Activated naive CD4-positive, alpha-beta T cell treated with anti-CD3 and anti-CD28 coated beads for 36 hours (primary cell): ENCODE measurements at regions of chr3 and their contacts with region 1.

Region 1: DNA sequence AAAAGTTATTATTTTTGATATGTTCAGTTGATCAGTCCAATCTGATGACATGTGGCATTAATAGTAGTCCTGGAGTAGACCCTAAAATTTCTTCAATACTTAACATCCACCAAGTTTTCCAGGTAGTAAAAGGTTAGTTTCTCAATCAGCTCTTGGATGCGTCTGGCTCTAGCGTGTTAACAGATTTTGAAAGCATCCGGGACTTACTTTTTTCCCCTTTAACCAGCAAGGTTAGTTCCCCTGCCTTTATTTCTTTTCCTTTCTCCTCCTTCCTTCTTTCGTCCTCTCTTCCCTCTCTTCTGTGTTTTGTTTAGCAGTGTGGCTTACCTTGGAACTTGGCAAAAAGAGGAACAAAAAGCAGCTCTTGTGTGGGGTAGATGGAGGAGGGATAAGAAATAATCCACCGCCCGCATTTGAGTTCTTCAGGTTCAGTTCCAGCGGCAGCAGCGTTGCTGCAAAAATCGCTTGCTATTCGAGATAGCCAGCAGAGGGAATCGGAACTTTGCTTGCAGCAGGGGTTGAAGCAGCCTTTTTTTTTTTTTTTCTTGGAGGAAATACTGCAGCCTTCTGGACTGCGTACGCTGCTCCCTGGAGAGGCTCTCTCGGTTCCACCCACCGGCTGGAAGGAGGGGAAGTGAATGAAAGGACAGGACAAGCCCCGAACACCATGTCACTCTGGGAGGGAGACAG is at the start of gene RBMS3:
- DNase-seq: peak; percentile 24
- H3K4me3 Mint-ChIP-seq: peak within 1 kb of the TSS; percentile 62
- H3K27ac Mint-ChIP-seq: peak within 1 kb of the TSS; percentile 64
- H3K4me1 Mint-ChIP-seq: peaks cover 34% of the 10 kb centered on the region
- H3K27me3 Mint-ChIP-seq: peaks cover 18% of the 10 kb centered on the region
- total RNA-seq, gene RBMS3: 0.84 to 1.1 TPM

Region 2: GRCh38 chr3:28840976-28841376 is 439.6 kb before region 1 on chr3:
- CTCF ChIA-PET with region 1: no interaction called
- intact Hi-C with region 1: loop called (anchors 1 kb)
- DNase-seq: peak; percentile 22
- H3K4me3 Mint-ChIP-seq: no peak overlapping the region
- H3K27ac Mint-ChIP-seq: no peak overlapping the region
- H3K4me1 Mint-ChIP-seq: peaks cover 5% of the 10 kb centered on the region
- H3K27me3 Mint-ChIP-seq: peaks cover 2% of the 10 kb centered on the region

Region 3: GRCh38 chr3:28935146-28935545 is 345.4 kb before region 1 on chr3:
- CTCF ChIA-PET with region 1: no interaction called
- intact Hi-C with region 1: loop called (anchors 1 kb)
- DNase-seq: peak; percentile 9
- H3K4me3 Mint-ChIP-seq: no peak overlapping the region
- H3K27ac Mint-ChIP-seq: peak overlapping the region; percentile 44
- H3K4me1 Mint-ChIP-seq: peaks cover 14% of the 10 kb centered on the region
- H3K27me3 Mint-ChIP-seq: peaks cover 3% of the 10 kb centered on the region

Region 4: GRCh38 chr3:29137601-29138000 is 142.9 kb before region 1 on chr3:
- CTCF ChIA-PET with region 1: no interaction called
- intact Hi-C with region 1: loop called (anchors 5 kb)
- DNase-seq: peak; percentile 34
- H3K4me3 Mint-ChIP-seq: no peak overlapping the region
- H3K27ac Mint-ChIP-seq: no peak overlapping the region
- H3K4me1 Mint-ChIP-seq: peaks cover 3% of the 10 kb centered on the region
- H3K27me3 Mint-ChIP-seq: no peaks in the 10 kb centered on the region

Region 5: GRCh38 chr3:29186982-29187725 is 93.4 kb before region 1 on chr3:
- CTCF ChIA-PET with region 1: no interaction called
- intact Hi-C with region 1: loop called (anchors 1 kb)
- DNase-seq: no peak
- H3K4me3 Mint-ChIP-seq: no peak overlapping the region
- H3K27ac Mint-ChIP-seq: peak overlapping the region; percentile 38
- H3K4me1 Mint-ChIP-seq: peaks cover 12% of the 10 kb centered on the region
- H3K27me3 Mint-ChIP-seq: no peaks in the 10 kb centered on the region

Region 6: GRCh38 chr3:29293206-29293775 is 12.7 kb after region 1 on chr3:
- CTCF ChIA-PET with region 1: no interaction called
- intact Hi-C with region 1: no loop called
- DNase-seq: no peak
- H3K4me3 Mint-ChIP-seq: no peak overlapping the region
- H3K27ac Mint-ChIP-seq: no peak overlapping the region
- H3K4me1 Mint-ChIP-seq: no peaks in the 10 kb centered on the region
- H3K27me3 Mint-ChIP-seq: peaks cover 5% of the 10 kb centered on the region

Region 7: DNA sequence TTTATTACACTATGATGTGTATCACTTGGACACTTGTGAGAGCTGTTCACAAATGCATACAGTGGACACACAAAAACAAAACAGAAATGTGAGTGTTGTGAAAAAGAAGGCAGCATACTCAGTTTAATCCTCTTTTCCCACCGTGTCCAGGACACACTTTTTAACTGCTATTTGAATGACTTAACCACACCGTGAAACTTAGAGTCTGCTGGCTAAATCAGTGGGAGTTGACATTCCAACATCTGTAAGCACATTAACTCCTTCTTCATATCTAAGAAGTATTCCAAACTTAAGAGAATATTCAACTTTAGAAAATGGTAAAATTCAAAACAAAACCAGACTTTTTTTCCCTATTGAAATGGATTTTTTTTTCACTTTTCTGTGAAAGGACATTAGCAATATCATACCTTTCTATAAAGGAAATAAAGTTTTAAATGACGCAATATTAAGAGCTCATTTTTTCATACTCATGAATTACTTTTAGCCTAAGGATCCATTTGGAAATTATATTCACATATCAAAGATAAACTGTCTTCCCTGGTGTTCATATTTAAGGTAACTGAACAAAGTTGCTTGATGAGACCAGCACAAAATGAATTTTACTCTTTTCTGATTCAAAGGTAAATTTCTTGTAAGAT is 316.9 kb after region 1 on chr3:
- CTCF ChIA-PET with region 1: no interaction called
- intact Hi-C with region 1: no loop called
- DNase-seq: no peak
- H3K4me3 Mint-ChIP-seq: no peak overlapping the region
- H3K27ac Mint-ChIP-seq: no peak overlapping the region
- H3K4me1 Mint-ChIP-seq: no peaks in the 10 kb centered on the region
- H3K27me3 Mint-ChIP-seq: no peaks in the 10 kb centered on the region

Region 8: DNA sequence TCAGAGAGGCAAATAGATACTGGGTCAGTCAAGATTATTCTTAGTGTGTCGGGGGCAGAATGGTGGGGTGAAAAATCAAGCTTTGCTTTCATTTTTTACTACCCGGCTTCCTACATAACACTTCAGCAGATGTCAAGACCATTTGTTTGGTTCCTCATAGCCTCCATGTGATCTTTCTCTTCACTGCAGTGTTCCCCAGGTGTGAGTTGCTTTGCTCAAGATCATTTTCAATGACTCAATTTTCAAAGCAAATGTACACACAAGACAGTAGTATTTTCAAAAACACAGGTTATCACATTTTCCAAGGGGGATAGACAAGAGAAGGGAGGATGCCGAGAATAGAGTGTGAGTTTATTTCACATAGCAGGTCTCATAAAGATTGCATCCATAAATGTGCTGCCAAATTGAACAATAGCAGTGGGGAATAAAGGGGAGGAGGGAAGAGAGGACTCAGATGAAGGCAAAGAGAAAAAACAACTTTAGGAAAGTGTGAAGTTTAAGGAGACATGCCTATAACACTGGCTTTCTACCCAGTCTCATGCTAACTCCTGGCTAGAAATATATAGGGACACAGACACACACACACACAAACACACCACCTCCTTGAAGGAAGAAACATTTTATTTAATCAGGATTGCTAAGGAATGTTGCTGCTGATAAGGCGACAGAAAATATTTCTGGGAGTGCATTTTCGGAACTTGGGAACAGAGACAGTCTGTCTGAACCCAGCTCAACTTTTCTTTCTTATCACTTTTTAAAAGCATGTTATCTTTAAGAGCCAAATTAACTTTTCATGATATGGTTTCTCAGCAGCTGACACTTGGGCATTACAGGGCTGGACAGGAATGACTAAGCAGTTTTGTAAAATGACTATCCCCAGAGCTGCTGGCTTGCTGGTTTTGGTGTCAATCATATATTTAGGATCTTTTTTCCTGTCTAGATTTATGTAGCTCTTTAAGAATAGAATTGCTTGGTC is 402.8 kb after region 1 on chr3:
- CTCF ChIA-PET with region 1: no interaction called
- intact Hi-C with region 1: loop called (anchors 2 kb)
- DNase-seq: no peak
- H3K4me3 Mint-ChIP-seq: no peak overlapping the region
- H3K27ac Mint-ChIP-seq: no peak overlapping the region
- H3K4me1 Mint-ChIP-seq: peaks cover 8% of the 10 kb centered on the region
- H3K27me3 Mint-ChIP-seq: peaks cover 7% of the 10 kb centered on the region